Natural killer cell (primary cell): ENCODE measurements at regions of chr19 and their contacts with region 1.

Region 1: GRCh38 chr19:13880059-13881043 is 3.4 kb downstream of the NANOS3 start:
- DNase-seq: peak; percentile 98 to 100
- ATAC-seq: peak; percentile 93 to 100 (median 98)
- H3K4me3 ChIP-seq: peak overlapping the region; percentile 11
- H3K4me3 Mint-ChIP-seq: peak overlapping the region; percentile 77
- H3K27ac ChIP-seq: peak overlapping the region; percentile 64
- H3K27ac Mint-ChIP-seq: peak overlapping the region; percentile 75 to 88
- H3K4me1 ChIP-seq: peaks cover 58% of the 10 kb centered on the region
- H3K4me1 Mint-ChIP-seq: peaks cover 18 to 45% of the 10 kb centered on the region in 2 donors
- H3K27me3 ChIP-seq: no peaks in the 10 kb centered on the region
- H3K27me3 Mint-ChIP-seq: no peaks in the 10 kb centered on the region
- CTCF ChIP-seq: peak; percentile 98

Region 2: GRCh38 chr19:13597640-13598039 is 282.7 kb before region 1 on chr19:
- intact Hi-C with region 1: loop called (anchors 5 kb)
- DNase-seq: peak in 1 of 2 donors; percentile 77
- ATAC-seq: peak; percentile 68 to 88 (median 79)
- H3K4me3 ChIP-seq: no peak overlapping the region
- H3K4me3 Mint-ChIP-seq: no peak overlapping the region
- H3K27ac ChIP-seq: no peak overlapping the region
- H3K27ac Mint-ChIP-seq: no peak overlapping the region
- H3K4me1 ChIP-seq: no peaks in the 10 kb centered on the region
- H3K4me1 Mint-ChIP-seq: no peaks in the 10 kb centered on the region
- H3K27me3 ChIP-seq: no peaks in the 10 kb centered on the region
- H3K27me3 Mint-ChIP-seq: peaks cover 8% of the 10 kb centered on the region in 2 donors
- CTCF ChIP-seq: no peak

Region 3: GRCh38 chr19:13774217-13775191 is 105.8 kb before region 1 on chr19 and contains the start of gene C19orf53:
- intact Hi-C with region 1: no loop called
- DNase-seq: peak; percentile 77 to 94
- ATAC-seq: peak; percentile 99 to 100 (median 99)
- H3K4me3 ChIP-seq: peak within 1 kb of the TSS; percentile 63
- H3K4me3 Mint-ChIP-seq: peak within 1 kb of the TSS; percentile 100
- H3K27ac ChIP-seq: peak within 1 kb of the TSS; percentile 63
- H3K27ac Mint-ChIP-seq: peak within 1 kb of the TSS; percentile 93 to 95
- H3K4me1 ChIP-seq: peaks cover 14% of the 10 kb centered on the region
- H3K4me1 Mint-ChIP-seq: peaks cover 19 to 28% of the 10 kb centered on the region in 2 donors
- H3K27me3 ChIP-seq: no peaks in the 10 kb centered on the region
- H3K27me3 Mint-ChIP-seq: no peaks in the 10 kb centered on the region
- CTCF ChIP-seq: no peak
- total RNA-seq, gene C19orf53: 52.2 to 56.6 (median 54.7) TPM

Region 4: GRCh38 chr19:13899912-13900584 is 19.7 kb after region 1 on chr19:
- intact Hi-C with region 1: no loop called
- DNase-seq: no peak
- ATAC-seq: no peak
- H3K4me3 ChIP-seq: no peak overlapping the region
- H3K4me3 Mint-ChIP-seq: no peak overlapping the region
- H3K27ac ChIP-seq: no peak overlapping the region
- H3K27ac Mint-ChIP-seq: no peak overlapping the region
- H3K4me1 ChIP-seq: peaks cover 6% of the 10 kb centered on the region
- H3K4me1 Mint-ChIP-seq: no peaks in the 10 kb centered on the region
- H3K27me3 ChIP-seq: no peaks in the 10 kb centered on the region
- H3K27me3 Mint-ChIP-seq: no peaks in the 10 kb centered on the region
- CTCF ChIP-seq: no peak

Region 5: DNA sequence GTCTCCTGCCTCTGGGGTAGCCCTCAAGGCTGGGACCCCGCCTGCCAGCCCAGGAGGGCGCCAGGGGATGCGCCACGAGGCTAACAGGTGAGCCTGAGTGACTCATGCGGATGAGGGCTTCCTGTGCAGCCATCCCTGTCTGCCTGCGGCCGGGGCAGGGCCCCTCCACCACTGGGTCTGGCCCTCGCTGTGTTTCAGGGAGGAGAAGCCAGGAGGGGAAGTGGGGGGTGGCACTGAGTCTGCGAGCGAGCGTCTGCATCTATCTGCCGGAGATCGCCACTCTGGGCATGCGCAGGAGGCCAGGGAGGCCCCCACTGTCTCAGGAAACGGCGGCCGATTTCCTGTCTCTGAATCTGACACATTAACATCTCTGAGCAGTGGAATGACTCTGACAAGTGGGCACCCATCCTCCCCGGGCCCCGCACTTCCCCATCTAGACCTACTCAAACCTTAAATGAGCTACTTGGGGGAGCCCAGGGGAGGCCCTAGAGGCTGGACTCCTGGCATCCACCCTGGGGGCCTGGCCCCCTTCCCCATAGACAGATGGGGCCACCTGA is 106.1 kb after region 1 on chr19:
- intact Hi-C with region 1: loop called (anchors 2 kb)
- DNase-seq: peak; percentile 96 to 99
- ATAC-seq: peak; percentile 86 to 95 (median 87)
- H3K4me3 ChIP-seq: peak overlapping the region; percentile 17
- H3K4me3 Mint-ChIP-seq: peak overlapping the region; percentile 79
- H3K27ac ChIP-seq: peak overlapping the region; percentile 100
- H3K27ac Mint-ChIP-seq: peak overlapping the region; percentile 97 to 98
- H3K4me1 ChIP-seq: peaks cover 59% of the 10 kb centered on the region
- H3K4me1 Mint-ChIP-seq: peaks cover 29 to 49% of the 10 kb centered on the region in 2 donors
- H3K27me3 ChIP-seq: no peaks in the 10 kb centered on the region
- H3K27me3 Mint-ChIP-seq: no peaks in the 10 kb centered on the region
- CTCF ChIP-seq: no peak

Region 6: DNA sequence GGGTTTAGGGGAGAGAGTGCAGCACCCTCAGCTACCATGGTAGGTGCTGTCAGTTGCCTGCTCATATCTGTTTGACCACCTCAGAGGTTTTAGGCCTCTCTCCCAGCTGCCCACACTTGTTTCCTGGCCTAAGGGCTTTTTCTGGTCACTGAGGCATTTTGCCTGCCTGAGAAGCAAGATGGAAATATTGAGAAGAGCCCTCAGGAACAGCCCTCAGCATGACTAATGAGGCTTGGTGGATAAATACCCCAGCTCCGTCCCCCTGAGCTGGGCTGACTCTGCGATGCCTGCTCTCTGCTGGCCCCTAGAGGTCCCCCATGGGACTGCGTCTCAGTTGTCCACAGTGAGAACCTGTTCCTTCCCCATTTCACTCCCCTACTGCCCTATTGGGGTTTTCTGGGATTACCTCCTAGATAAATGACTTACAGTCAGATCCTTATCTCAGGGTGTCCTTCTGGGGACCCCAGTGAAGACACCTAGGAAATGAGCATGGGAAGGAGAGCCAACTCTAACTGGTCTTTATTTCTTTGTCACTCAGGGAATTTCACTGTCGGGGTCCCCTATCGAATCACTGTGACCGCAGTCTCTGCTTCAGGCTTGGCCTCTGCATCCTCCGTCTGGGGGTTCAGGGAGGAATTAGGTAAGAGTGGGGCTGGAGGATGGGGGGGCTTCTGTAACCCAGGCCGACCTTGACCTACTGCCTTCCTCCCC is 168.2 kb after region 1 on chr19:
- intact Hi-C with region 1: loop called (anchors 1 kb)
- DNase-seq: peak; percentile 79 to 84
- ATAC-seq: peak; percentile 87 to 98 (median 90)
- H3K4me3 ChIP-seq: no peak overlapping the region
- H3K4me3 Mint-ChIP-seq: no peak overlapping the region
- H3K27ac ChIP-seq: no peak overlapping the region
- H3K27ac Mint-ChIP-seq: peak overlapping the region; percentile 57 to 82
- H3K4me1 ChIP-seq: no peaks in the 10 kb centered on the region
- H3K4me1 Mint-ChIP-seq: peaks cover 0 to 11% of the 10 kb centered on the region in 2 donors
- H3K27me3 ChIP-seq: no peaks in the 10 kb centered on the region
- H3K27me3 Mint-ChIP-seq: no peaks in the 10 kb centered on the region
- CTCF ChIP-seq: peak; percentile 98

Region 7: DNA sequence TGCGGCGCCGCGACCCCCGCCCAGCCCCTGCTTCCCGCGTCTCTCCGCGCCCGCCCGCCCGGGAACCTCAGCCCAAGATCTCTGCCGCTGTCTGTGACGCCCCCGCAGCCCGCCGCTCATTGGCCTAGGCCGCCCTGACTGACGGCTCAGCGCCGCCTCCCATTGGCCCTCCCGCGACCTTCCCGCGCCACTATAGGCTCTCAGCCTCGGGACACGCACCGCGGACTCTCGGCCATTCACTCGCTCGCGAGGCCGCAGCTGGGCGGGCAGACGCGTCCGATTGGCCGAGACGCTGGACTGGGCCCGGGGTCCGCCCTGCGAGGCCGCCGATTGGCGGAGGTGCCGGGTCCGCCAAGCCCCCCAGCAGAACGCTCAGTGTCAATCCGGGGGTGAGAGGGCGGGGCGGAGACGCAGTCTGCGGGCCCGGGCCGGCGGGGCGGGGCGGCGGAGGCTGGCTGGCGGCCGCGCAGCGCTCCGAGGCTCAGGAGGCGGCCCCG is 237.4 kb after region 1 on chr19 and contains the start of gene PRKACA:
- intact Hi-C with region 1: loop called (anchors 1 kb)
- DNase-seq: peak; percentile 98 to 99
- ATAC-seq: peak; percentile 85 to 96 (median 88)
- H3K4me3 ChIP-seq: peak within 1 kb of the TSS; percentile 65
- H3K4me3 Mint-ChIP-seq: peak within 1 kb of the TSS; percentile 97
- H3K27ac ChIP-seq: peak within 1 kb of the TSS; percentile 99
- H3K27ac Mint-ChIP-seq: peak within 1 kb of the TSS; percentile 94 to 97
- H3K4me1 ChIP-seq: peaks cover 52% of the 10 kb centered on the region
- H3K4me1 Mint-ChIP-seq: peaks cover 27 to 36% of the 10 kb centered on the region in 2 donors
- H3K27me3 ChIP-seq: no peaks in the 10 kb centered on the region
- H3K27me3 Mint-ChIP-seq: no peaks in the 10 kb centered on the region
- CTCF ChIP-seq: no peak
- total RNA-seq, gene PRKACA: 68.6 to 71.8 (median 69.3) TPM

Region 8: GRCh38 chr19:14147797-14148605 is 267.6 kb after region 1 on chr19:
- intact Hi-C with region 1: no loop called
- DNase-seq: peak; percentile 71 to 73
- ATAC-seq: peak; percentile 84 to 91 (median 86)
- H3K4me3 ChIP-seq: no peak overlapping the region
- H3K4me3 Mint-ChIP-seq: peak overlapping the region; percentile 81
- H3K27ac ChIP-seq: peak overlapping the region; percentile 87
- H3K27ac Mint-ChIP-seq: peak overlapping the region; percentile 92 to 97
- H3K4me1 ChIP-seq: peaks cover 31% of the 10 kb centered on the region
- H3K4me1 Mint-ChIP-seq: peaks cover 23 to 37% of the 10 kb centered on the region in 2 donors
- H3K27me3 ChIP-seq: no peaks in the 10 kb centered on the region
- H3K27me3 Mint-ChIP-seq: no peaks in the 10 kb centered on the region
- CTCF ChIP-seq: peak; percentile 87

Region 9: DNA sequence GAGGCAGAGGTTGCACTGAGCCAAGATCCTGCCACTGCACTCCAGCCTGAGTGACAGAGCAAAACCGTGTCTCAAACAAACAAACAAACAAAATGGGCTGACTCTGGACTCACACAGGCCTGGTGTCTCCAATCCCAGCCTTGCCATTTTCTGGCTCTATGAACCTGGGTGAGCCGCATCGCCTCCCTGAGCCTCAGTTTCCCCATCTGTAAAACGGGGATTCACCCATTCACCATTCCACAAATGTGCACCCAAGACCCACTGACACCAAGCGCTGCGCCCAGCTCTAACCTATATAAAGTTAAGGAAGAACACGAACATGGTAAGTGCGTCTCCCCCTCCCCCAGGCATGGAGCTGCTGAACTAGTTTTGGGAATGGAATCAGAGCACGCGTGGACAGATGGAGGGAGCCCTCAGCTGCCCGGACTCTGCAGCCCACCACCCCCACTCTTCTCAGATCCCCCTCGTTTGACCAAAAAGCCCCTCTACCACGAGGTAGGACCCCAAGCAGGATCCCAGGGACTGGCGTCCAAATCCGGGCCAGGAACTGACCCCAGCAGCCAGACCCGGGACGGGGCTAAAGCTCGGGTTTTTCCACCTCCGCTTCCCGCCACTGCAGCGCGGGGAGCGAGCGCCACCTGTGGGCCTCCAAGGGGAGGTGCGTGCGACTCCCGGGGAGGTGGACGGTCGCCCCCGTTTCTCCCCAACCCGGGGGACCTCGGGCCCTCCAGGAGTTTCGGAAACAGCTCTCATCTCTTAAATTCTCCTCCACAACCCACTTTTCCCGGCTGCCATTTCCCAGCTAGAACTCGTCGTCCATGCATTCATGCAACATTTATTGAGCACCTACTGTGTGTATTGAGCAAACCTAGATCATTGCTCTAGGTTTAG is 467.9 kb after region 1 on chr19:
- intact Hi-C with region 1: loop called (anchors 5 kb)
- DNase-seq: peak; percentile 76 to 80
- ATAC-seq: peak; percentile 82 to 95 (median 93)
- H3K4me3 ChIP-seq: peak overlapping the region; percentile 7
- H3K4me3 Mint-ChIP-seq: peak overlapping the region; percentile 82
- H3K27ac ChIP-seq: no peak overlapping the region
- H3K27ac Mint-ChIP-seq: peak overlapping the region in 1 of 2 donors; percentile 72
- H3K4me1 ChIP-seq: peaks cover 29% of the 10 kb centered on the region
- H3K4me1 Mint-ChIP-seq: peaks cover 16 to 29% of the 10 kb centered on the region in 2 donors
- H3K27me3 ChIP-seq: no peaks in the 10 kb centered on the region
- H3K27me3 Mint-ChIP-seq: no peaks in the 10 kb centered on the region
- CTCF ChIP-seq: peak; percentile 97

Region 10: GRCh38 chr19:14472202-14472938 is 592.0 kb after region 1 on chr19:
- intact Hi-C with region 1: loop called (anchors 10 kb)
- DNase-seq: peak; percentile 90
- ATAC-seq: peak; percentile 28 to 76 (median 48)
- H3K4me3 ChIP-seq: no peak overlapping the region
- H3K4me3 Mint-ChIP-seq: peak overlapping the region; percentile 64
- H3K27ac ChIP-seq: no peak overlapping the region
- H3K27ac Mint-ChIP-seq: peak overlapping the region; percentile 11 to 99
- H3K4me1 ChIP-seq: peaks cover 52% of the 10 kb centered on the region
- H3K4me1 Mint-ChIP-seq: peaks cover 29 to 51% of the 10 kb centered on the region in 2 donors
- H3K27me3 ChIP-seq: peaks cover 11% of the 10 kb centered on the region
- H3K27me3 Mint-ChIP-seq: peaks cover 0 to 11% of the 10 kb centered on the region in 2 donors
- CTCF ChIP-seq: peak; percentile 99